ENCODE measurements at regions of chr15 and their contacts with region 1.

Region 1: DNA sequence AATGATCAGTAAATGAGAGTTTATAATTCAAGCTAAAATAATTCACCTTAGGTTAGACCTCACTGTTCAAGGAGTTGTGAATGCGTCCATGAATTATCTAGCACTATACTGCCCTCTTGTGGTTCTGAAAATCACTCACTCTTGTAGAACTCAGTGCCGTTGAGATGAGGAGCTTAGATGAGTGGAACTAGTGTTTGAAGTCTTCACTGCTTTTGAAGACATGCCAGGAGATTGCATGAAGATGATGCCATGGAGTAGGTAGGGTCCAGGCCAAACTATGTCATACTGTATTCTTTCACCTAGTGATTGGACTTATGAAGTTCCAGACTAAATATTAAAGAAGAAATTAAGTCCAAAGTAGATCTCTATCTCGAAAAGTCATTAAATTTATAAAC is 28.8 kb downstream of the LYSMD4 start:
- DNase-seq: peak; percentile 65
- ATAC-seq: peak; percentile 71
- H3K4me3 Mint-ChIP-seq: no peak overlapping the region
- H3K27ac Mint-ChIP-seq: no peak overlapping the region
- H3K4me1 Mint-ChIP-seq: peaks cover 48% of the 10 kb centered on the region
- H3K27me3 Mint-ChIP-seq: no peaks in the 10 kb centered on the region

Region 2: GRCh38 chr15:99275525-99276128 is 428.8 kb before region 1 on chr15:
- CTCF ChIA-PET with region 1: interaction called, 120 read pairs
- POLR2A ChIA-PET with region 1: interaction called, 3 read pairs
- DNase-seq: no peak
- ATAC-seq: no peak
- H3K4me3 Mint-ChIP-seq: no peak overlapping the region
- H3K27ac Mint-ChIP-seq: no peak overlapping the region
- H3K4me1 Mint-ChIP-seq: peaks cover 23% of the 10 kb centered on the region
- H3K27me3 Mint-ChIP-seq: no peaks in the 10 kb centered on the region

Region 3: GRCh38 chr15:99343881-99344551 is 360.4 kb before region 1 on chr15:
- CTCF ChIA-PET with region 1: interaction called, 28 read pairs
- POLR2A ChIA-PET with region 1: no interaction called
- DNase-seq: peak; percentile 42
- ATAC-seq: peak; percentile 69
- H3K4me3 Mint-ChIP-seq: no peak overlapping the region
- H3K27ac Mint-ChIP-seq: no peak overlapping the region
- H3K4me1 Mint-ChIP-seq: no peaks in the 10 kb centered on the region
- H3K27me3 Mint-ChIP-seq: no peaks in the 10 kb centered on the region

Region 4: DNA sequence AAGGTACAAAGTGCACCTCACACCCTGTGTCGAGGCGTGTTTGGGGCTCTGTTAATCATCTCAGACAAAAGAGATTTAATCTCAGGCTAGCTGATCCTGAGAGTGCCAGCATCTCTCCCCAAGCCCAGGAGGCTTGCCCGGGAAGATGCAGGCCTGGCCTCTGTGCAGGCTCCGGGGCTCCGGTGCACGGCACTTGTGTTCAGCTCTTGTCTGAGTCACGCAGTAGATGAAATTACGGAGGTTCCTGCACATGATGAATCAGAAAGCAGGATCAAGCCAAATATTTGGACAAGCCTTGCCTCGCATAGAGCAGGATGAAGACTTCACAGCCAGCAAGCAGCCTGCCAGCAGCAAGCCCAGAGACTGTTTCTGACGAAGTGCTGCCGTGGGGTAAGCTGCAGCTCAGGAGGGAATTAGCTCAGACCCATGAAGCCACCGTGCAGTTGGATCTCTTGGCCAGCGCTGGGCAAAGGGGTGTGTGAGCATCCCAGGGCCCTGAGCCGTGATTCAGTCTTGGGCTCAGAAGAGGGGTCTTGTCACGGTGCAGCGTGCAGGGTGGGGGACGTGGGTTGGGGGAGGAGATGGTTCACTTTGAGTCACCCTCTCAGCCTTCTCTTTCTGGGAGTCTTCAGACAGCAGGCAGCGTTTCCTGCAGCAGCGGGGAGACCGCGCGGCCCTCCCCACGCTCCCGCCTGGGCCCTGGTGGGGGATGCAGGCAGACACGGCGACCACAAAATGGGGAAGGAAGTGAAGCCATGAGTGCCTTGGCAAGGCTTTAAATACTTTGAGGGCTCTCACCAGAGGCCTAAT is 227.8 kb before region 1 on chr15:
- CTCF ChIA-PET with region 1: interaction called, 12 read pairs
- POLR2A ChIA-PET with region 1: no interaction called
- DNase-seq: peak; percentile 66
- ATAC-seq: peak; percentile 59
- H3K4me3 Mint-ChIP-seq: peak overlapping the region; percentile 5
- H3K27ac Mint-ChIP-seq: peak overlapping the region; percentile 69
- H3K4me1 Mint-ChIP-seq: peaks cover 49% of the 10 kb centered on the region
- H3K27me3 Mint-ChIP-seq: peaks cover 7% of the 10 kb centered on the region

Region 5: GRCh38 chr15:99682455-99682854 is 22.0 kb before region 1 on chr15:
- CTCF ChIA-PET with region 1: interaction called, 37 read pairs
- POLR2A ChIA-PET with region 1: no interaction called
- DNase-seq: no peak
- ATAC-seq: no peak
- H3K4me3 Mint-ChIP-seq: no peak overlapping the region
- H3K27ac Mint-ChIP-seq: peak overlapping the region; percentile 70
- H3K4me1 Mint-ChIP-seq: peaks cover 27% of the 10 kb centered on the region
- H3K27me3 Mint-ChIP-seq: no peaks in the 10 kb centered on the region

Region 6: GRCh38 chr15:99755692-99756409 is 51.4 kb after region 1 on chr15:
- CTCF ChIA-PET with region 1: interaction called, 45 read pairs
- POLR2A ChIA-PET with region 1: no interaction called
- DNase-seq: peak; percentile 58
- ATAC-seq: peak; percentile 88
- H3K4me3 Mint-ChIP-seq: no peak overlapping the region
- H3K27ac Mint-ChIP-seq: no peak overlapping the region
- H3K4me1 Mint-ChIP-seq: peaks cover 7% of the 10 kb centered on the region
- H3K27me3 Mint-ChIP-seq: peaks cover 11% of the 10 kb centered on the region

Region 7: GRCh38 chr15:99902248-99902928 is 197.9 kb after region 1 on chr15:
- CTCF ChIA-PET with region 1: no interaction called
- POLR2A ChIA-PET with region 1: no interaction called
- DNase-seq: no peak
- ATAC-seq: no peak
- H3K4me3 Mint-ChIP-seq: no peak overlapping the region
- H3K27ac Mint-ChIP-seq: no peak overlapping the region
- H3K4me1 Mint-ChIP-seq: no peaks in the 10 kb centered on the region
- H3K27me3 Mint-ChIP-seq: no peaks in the 10 kb centered on the region

Measured in activated CD8-positive, alpha-beta T cell treated with anti-CD3 and anti-CD28 coated beads, Interleukin-2, amount 10 ng/mL, durations not matched to agents 7 days and 5 days (primary cell).